ENCODE measurements at regions of chr1 and their contacts with region 1.

Region 1: DNA sequence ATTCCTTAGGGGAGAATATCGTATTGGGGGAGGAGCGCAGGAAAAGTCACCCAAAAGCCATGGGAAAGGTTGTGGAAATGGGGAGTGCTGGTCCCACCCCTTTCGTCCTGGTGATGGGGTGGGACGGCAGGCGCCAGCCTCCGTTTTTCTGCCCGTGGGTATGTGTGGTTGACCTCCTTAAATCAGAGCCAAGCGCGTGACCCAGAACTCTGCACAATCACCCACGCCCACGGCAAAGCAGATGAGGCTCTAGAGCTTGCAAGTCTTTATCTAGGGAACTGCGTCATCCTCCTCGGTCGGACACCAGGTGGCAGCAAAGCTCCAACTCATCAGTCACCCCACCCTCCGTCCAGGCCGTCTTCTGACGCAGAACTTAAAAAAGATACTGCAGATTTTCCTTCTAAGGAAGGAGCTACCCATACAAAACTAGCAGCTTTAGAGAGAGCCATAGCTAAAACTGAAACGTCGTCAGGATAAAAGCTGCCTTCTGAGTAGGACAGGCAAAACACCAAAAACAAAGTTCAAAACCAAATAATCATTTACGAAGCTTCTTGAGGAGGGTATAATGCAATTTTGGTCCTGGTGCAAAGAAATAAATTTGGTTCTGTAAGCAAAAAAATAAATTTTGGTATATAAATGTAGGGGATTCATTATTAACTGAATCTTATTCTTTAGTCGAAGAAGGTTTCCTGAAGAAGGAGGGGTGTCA is 62.0 kb downstream of the TBX19 start:
- DNase-seq: peak; percentile 94
- H3K4me3 ChIP-seq: peak overlapping the region in 1 of 8 donors; percentile 50
- H3K27ac ChIP-seq: peak overlapping the region in 5 of 8 donors; percentile 44 to 63 (median 56)
- H3K4me1 ChIP-seq: peaks cover 0 to 35% (median 15%) of the 10 kb centered on the region in 6 donors
- H3K27me3 ChIP-seq: no peaks in the 10 kb centered on the region
- CTCF ChIP-seq: peak; percentile 60 to 91 (median 85)
- POLR2A ChIP-seq: no peak

Region 2: DNA sequence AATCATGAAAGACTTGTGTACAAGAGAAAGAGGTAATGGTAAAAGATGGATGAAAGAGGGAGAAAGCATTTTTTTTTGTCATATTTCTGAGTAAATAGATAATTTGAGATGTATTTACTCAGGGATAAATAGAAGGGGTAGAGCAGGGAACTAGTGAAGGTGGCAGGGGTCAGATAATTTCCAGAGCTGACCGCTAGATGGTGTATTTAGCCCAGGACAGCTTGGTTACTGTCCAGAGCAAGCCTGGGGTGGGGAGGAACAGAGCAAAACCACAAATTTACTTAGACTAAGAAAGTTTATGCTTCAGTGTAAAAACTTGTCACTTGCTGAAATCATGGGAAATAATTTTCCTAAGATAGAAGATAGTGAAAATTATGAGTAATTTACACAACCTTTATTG is 109.6 kb after region 1 on chr1:
- intact Hi-C with region 1: no loop called
- DNase-seq: no peak
- H3K4me3 ChIP-seq: no peak overlapping the region
- H3K27ac ChIP-seq: no peak overlapping the region
- H3K4me1 ChIP-seq: no peaks in the 10 kb centered on the region
- H3K27me3 ChIP-seq: no peaks in the 10 kb centered on the region
- CTCF ChIP-seq: no peak
- POLR2A ChIP-seq: no peak

Region 3: DNA sequence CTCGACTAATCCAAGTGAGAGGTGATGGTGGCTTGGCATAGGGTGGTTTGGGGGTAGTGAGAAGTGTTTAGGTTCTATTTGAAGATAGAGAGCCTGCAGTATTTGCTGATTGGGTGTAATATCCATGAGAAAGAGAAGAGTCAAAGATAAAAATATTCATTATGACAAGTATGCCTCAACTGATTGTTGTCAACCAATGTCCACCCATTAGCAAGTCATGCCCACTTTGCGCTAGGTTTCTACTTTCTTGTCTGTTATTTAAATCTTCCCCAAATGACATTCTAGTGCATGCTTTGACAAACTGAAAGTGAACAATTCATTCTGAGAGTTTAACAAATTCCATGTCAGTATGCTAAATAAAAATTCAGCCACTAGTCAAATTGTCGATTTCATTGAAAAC is 229.9 kb after region 1 on chr1:
- intact Hi-C with region 1: loop called (anchors 10 kb)
- DNase-seq: no peak
- H3K4me3 ChIP-seq: no peak overlapping the region
- H3K27ac ChIP-seq: no peak overlapping the region
- H3K4me1 ChIP-seq: peaks cover 0 to 3% (median 0%) of the 10 kb centered on the region in 6 donors
- H3K27me3 ChIP-seq: peaks cover 0 to 6% (median 0%) of the 10 kb centered on the region in 7 donors
- CTCF ChIP-seq: no peak
- POLR2A ChIP-seq: no peak